ENCODE measurements at regions of chr22 and their contacts with region 1.

Region 1: GRCh38 chr22:17171313-17172171 is 12.5 kb upstream of the HDHD5 start:
- DNase-seq: peak; percentile 84
- H3K4me3 Mint-ChIP-seq: peak overlapping the region; percentile 81
- H3K27ac Mint-ChIP-seq: peak overlapping the region; percentile 65
- H3K4me1 Mint-ChIP-seq: peaks cover 11% of the 10 kb centered on the region
- H3K27me3 Mint-ChIP-seq: peaks cover 38% of the 10 kb centered on the region

Region 2: DNA sequence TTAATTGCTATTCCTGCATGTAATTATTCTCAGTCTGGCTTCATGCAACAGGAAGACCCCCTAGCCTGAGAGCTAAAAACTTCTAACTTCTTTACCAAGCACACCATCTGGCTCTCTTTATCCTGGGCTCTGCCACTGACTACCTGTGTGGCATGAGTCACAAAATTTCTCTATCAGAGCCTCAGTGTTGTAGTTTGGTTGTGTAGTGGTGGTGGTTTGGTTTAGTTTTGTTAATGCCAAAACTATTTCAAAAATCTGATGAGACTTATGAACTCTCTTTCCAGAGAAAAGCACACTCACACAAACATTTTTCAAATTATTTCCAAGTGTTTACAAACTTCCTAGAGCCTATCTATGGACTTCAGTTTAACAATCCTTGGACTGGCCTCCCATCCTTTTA is 94.3 kb before region 1 on chr22:
- CTCF ChIA-PET with region 1: interaction called, 36 read pairs
- DNase-seq: no peak
- H3K4me3 Mint-ChIP-seq: no peak overlapping the region
- H3K27ac Mint-ChIP-seq: no peak overlapping the region
- H3K4me1 Mint-ChIP-seq: peaks cover 19% of the 10 kb centered on the region
- H3K27me3 Mint-ChIP-seq: peaks cover 51% of the 10 kb centered on the region

Region 3: GRCh38 chr22:17084554-17085276 is 86.8 kb before region 1 on chr22 and contains the start of gene IL17RA:
- CTCF ChIA-PET with region 1: interaction called, 16 read pairs
- DNase-seq: peak; percentile 96
- H3K4me3 Mint-ChIP-seq: peak within 1 kb of the TSS; percentile 94
- H3K27ac Mint-ChIP-seq: peak within 1 kb of the TSS; percentile 94
- H3K4me1 Mint-ChIP-seq: peaks cover 50% of the 10 kb centered on the region
- H3K27me3 Mint-ChIP-seq: peaks cover 14% of the 10 kb centered on the region

Region 4: DNA sequence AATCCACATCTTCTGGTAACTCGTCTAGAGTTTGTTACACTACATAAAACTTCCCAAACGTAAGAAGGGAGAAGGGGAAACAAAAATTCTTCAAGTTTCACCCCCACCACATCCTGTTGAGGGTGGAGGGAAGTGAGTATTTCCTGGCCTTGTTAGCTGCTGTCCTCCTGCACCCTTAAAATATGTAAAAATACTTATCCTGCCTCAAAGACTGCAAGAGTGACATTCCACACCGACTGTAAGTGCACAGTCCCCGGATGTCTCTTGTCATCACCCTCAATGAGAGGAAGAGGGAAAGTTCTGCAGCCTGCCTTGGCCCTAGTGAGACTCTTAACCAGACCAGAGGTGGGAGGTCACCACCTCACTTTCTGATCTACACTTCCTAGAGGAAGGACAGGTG is 53.7 kb before region 1 on chr22:
- CTCF ChIA-PET with region 1: interaction called, 14 read pairs
- DNase-seq: peak; percentile 47
- H3K4me3 Mint-ChIP-seq: peak overlapping the region; percentile 59
- H3K27ac Mint-ChIP-seq: peak overlapping the region; percentile 86
- H3K4me1 Mint-ChIP-seq: peaks cover 58% of the 10 kb centered on the region
- H3K27me3 Mint-ChIP-seq: peaks cover 46% of the 10 kb centered on the region

Region 5: GRCh38 chr22:17218341-17218740 is 46.8 kb after region 1 on chr22:
- CTCF ChIA-PET with region 1: interaction called, 11 read pairs
- DNase-seq: no peak
- H3K4me3 Mint-ChIP-seq: peak overlapping the region; percentile 82
- H3K27ac Mint-ChIP-seq: peak overlapping the region; percentile 97
- H3K4me1 Mint-ChIP-seq: peaks cover 79% of the 10 kb centered on the region
- H3K27me3 Mint-ChIP-seq: peaks cover 10% of the 10 kb centered on the region

Region 6: DNA sequence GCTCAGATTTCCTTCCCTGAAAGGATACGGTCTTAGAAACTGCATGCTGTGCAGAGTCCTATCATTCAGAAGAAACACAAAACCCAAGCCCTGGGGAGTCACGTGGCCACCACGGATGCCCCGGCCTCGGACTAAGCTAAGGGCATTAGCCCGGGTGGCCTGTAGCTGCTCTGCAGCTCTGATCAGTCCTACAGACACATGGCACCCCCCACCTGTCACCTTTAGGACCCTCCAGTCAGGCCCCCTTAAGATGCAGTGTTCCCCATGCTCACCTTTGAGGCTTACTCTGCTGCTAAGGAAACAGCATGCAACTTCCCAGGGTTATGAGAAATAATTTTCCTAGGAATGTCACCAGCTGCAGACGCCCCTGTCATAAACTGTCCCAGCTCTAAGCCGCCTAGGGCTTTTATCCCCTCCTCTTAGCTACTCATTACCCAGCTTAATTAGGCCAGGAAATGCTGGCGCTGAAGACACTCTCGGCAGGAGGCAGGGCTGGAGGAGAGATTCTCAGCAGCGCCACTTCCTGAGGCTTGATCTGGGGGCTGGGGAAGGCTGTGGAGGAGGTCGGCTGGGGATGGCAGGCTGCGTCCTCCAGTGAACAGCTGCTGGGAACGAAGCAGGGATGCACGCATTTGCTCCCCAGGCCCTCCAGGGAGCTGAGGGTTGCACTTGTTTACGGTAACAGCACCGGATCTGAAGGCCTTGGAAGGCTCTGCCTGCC is 94.9 kb after region 1 on chr22:
- CTCF ChIA-PET with region 1: interaction called, 10 read pairs
- DNase-seq: peak; percentile 59
- H3K4me3 Mint-ChIP-seq: no peak overlapping the region
- H3K27ac Mint-ChIP-seq: peak overlapping the region; percentile 72
- H3K4me1 Mint-ChIP-seq: peaks cover 33% of the 10 kb centered on the region
- H3K27me3 Mint-ChIP-seq: peaks cover 25% of the 10 kb centered on the region

Region 7: GRCh38 chr22:17501679-17502285 is 330.2 kb after region 1 on chr22:
- CTCF ChIA-PET with region 1: interaction called, 68 read pairs
- DNase-seq: peak; percentile 33
- H3K4me3 Mint-ChIP-seq: no peak overlapping the region
- H3K27ac Mint-ChIP-seq: no peak overlapping the region
- H3K4me1 Mint-ChIP-seq: no peaks in the 10 kb centered on the region
- H3K27me3 Mint-ChIP-seq: peaks cover 9% of the 10 kb centered on the region

Measured in activated naive CD4-positive, alpha-beta T cell treated with anti-CD3 and anti-CD28 coated beads, Interleukin-2, amount 10 ng/mL, durations not matched to agents 7 days and 5 days (primary cell).